Heart right ventricle (tissue), 16 donors: ENCODE measurements at regions of chr14 and their contacts with region 1.

Region 1: DNA sequence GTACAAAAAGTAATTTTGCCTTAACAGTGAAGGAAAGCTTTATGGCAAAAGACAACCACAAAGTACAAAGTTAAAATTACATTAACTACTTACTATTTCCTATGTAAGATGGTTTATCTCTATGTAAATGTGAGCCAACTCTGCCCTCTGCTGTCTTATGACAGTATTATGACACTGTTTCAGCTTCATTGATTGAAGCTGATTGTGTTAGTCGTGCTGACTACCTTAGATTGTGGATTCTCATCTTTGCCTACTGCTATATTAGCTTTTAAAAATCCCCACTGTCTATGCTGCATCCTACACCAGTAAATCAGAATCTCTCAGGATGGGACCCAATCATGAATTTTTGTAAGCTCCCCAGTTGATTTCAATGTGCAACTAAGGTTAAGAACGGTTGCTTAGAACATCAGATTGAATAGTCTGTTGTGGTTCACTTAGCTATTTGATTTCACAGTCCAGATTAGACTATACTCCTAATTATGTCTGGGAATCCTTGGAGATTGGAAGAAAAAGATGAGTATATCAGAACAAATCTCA is 12.2 kb upstream of the SPTB start:
- DNase-seq: peak in 1 of 2 donors; percentile 24
- ATAC-seq: peak; percentile 43 to 81 (median 75)
- H3K4me3 ChIP-seq: no peak overlapping the region
- H3K27ac ChIP-seq: no peak overlapping the region
- H3K4me1 ChIP-seq: no peaks in the 10 kb centered on the region
- H3K27me3 ChIP-seq: peaks cover 0 to 23% (median 5%) of the 10 kb centered on the region in 7 donors
- CTCF ChIP-seq: peak in 8 of 9 donors; percentile 31 to 73 (median 68)

Region 2: DNA sequence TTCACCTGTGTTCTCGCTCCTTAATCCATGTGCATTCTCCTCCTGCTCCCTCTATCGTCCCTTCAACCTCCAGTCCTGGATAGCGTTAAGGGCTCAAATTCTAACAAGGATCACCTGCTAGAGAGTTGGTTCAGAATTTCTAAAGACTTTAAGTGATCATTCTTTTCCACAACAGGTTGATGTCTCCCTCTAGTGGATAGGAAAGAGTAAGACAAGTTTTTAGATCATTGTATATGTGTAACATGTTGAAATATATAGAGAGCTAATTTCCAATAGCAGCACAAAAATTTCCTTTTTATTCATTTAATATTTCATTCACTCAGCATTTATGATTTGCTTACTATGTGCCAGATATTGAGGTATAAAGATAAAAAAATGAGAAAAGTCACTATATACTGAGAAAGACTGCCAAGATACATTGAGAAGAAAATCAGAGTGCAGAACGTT is 588.4 kb before region 1 on chr14:
- intact Hi-C with region 1: no loop called
- DNase-seq: no peak
- ATAC-seq: peak in 6 of 8 donors; percentile 11 to 61 (median 51)
- H3K4me3 ChIP-seq: no peak overlapping the region
- H3K27ac ChIP-seq: no peak overlapping the region
- H3K4me1 ChIP-seq: no peaks in the 10 kb centered on the region
- H3K27me3 ChIP-seq: no peaks in the 10 kb centered on the region
- CTCF ChIP-seq: peak; percentile 68 to 88 (median 77)

Region 3: GRCh38 chr14:64671591-64671990 is 220.3 kb before region 1 on chr14:
- intact Hi-C with region 1: loop called in 8 of 10 experiments (anchors 5 to 10 kb)
- DNase-seq: peak in 1 of 2 donors; percentile 31
- ATAC-seq: peak in 7 of 8 donors; percentile 44 to 76 (median 54)
- H3K4me3 ChIP-seq: no peak overlapping the region
- H3K27ac ChIP-seq: peak overlapping the region in 1 of 10 donors; percentile 22
- H3K4me1 ChIP-seq: peaks cover 0 to 37% (median 0%) of the 10 kb centered on the region in 9 donors
- H3K27me3 ChIP-seq: no peaks in the 10 kb centered on the region
- CTCF ChIP-seq: peak; percentile 59 to 80 (median 77)

Region 4: DNA sequence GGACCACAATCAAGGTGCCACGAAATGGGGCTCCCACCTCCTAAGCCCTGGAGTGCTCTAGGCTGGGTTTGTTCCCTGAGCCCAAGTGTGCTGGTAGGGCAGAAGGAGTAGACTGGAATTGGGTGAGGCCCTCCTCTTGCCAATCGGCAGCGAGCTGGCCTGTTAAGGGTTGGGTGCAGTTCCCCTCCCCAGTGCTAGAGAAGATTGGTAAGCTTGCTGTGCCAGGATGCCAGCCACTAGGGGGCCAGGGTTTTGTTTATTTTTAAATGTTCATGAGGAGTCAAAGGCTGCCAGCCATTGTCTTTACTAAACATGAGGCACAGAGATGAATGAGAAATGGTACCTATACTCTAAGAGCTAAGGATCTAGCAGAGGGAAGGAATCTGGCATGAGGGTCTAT is 91.9 kb before region 1 on chr14:
- intact Hi-C with region 1: loop called in 2 of 10 experiments (anchors 5 kb)
- DNase-seq: peak; percentile 34 to 54
- ATAC-seq: peak; percentile 46 to 80 (median 68)
- H3K4me3 ChIP-seq: no peak overlapping the region
- H3K27ac ChIP-seq: no peak overlapping the region
- H3K4me1 ChIP-seq: peaks cover 0 to 10% (median 0%) of the 10 kb centered on the region in 9 donors
- H3K27me3 ChIP-seq: no peaks in the 10 kb centered on the region
- CTCF ChIP-seq: peak; percentile 27 to 67 (median 52)

Region 5: GRCh38 chr14:64817631-64818030 is 74.3 kb before region 1 on chr14:
- intact Hi-C with region 1: loop called in 8 of 10 experiments (anchors 2 to 5 kb)
- DNase-seq: no peak
- ATAC-seq: peak in 1 of 8 donors; percentile 15
- H3K4me3 ChIP-seq: no peak overlapping the region
- H3K27ac ChIP-seq: no peak overlapping the region
- H3K4me1 ChIP-seq: peaks cover 0 to 25% (median 11%) of the 10 kb centered on the region in 9 donors
- H3K27me3 ChIP-seq: no peaks in the 10 kb centered on the region
- CTCF ChIP-seq: no peak

Region 6: GRCh38 chr14:64823305-64823861 is 68.5 kb before region 1 on chr14:
- intact Hi-C with region 1: loop called in 8 of 10 experiments (anchors 2 to 5 kb)
- DNase-seq: peak; percentile 73 to 80
- ATAC-seq: peak; percentile 81 to 91 (median 86)
- H3K4me3 ChIP-seq: peak overlapping the region in 1 of 10 donors; percentile 11
- H3K27ac ChIP-seq: peak overlapping the region in 4 of 10 donors; percentile 18 to 36 (median 24)
- H3K4me1 ChIP-seq: peaks cover 5 to 46% (median 29%) of the 10 kb centered on the region in 9 donors
- H3K27me3 ChIP-seq: peaks cover 0 to 3% (median 0%) of the 10 kb centered on the region in 7 donors
- CTCF ChIP-seq: peak; percentile 34 to 86 (median 79)